Dendritic cell treated with granulocyte-macrophage colony-stimulating factor and Interleukin-4, amounts not matched to agents 40 ng/mL and 50 ng/mL, for 4 days (primary cell): ENCODE measurements at regions of chr4 and their contacts with region 1.

Region 1: DNA sequence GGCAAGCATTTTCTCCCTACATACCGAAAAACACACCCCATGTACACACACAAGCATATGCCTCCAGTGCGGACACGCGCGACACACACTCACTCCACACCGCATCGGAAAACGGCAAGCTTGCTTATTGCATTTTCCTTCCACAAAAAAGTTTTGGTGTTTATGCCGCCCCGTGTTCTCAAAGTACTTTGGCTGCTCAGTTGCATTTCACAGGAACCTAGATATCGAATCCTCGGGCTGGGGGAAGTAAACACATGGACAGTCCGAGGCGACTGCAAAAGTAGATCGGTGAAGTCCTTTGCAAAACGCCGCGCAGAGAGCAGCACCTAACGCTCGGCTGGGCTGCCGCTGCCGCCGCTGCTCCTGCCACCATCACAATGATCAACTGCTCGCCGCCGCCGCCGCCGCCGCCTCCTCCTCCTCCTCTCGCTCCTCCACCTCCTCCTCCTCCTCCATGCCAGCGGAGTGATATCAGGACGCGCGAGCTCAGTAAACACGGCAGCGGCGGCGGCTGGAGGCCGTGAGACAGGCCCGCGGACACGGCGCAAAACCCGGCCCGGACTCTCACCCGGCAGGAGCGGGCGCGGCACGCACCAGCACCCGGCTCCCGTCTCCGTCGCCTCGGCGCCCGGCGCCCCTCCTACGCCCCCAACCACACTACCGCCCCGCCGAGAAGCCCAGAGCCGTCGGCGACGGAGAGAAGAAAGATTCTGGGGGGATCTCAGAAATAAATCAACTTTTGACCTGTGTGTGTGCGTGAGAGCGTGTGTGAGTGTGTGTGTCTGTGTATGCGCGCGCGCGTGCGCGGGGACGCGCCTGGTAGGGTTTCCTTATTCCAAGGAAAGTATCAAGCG is at the start of gene MAML3:
- H3K4me3 Mint-ChIP-seq: peak within 1 kb of the TSS; percentile 92
- H3K27ac Mint-ChIP-seq: peak within 1 kb of the TSS; percentile 96
- H3K4me1 Mint-ChIP-seq: peaks cover 22% of the 10 kb centered on the region
- H3K27me3 Mint-ChIP-seq: no peaks in the 10 kb centered on the region

Region 2: GRCh38 chr4:139554893-139555704 is 598.8 kb before region 1 on chr4:
- intact Hi-C with region 1: loop called (anchors 10 kb)
- H3K4me3 Mint-ChIP-seq: peak overlapping the region; percentile 95
- H3K27ac Mint-ChIP-seq: peak overlapping the region; percentile 97
- H3K4me1 Mint-ChIP-seq: peaks cover 45% of the 10 kb centered on the region
- H3K27me3 Mint-ChIP-seq: peaks cover 7% of the 10 kb centered on the region

Region 3: DNA sequence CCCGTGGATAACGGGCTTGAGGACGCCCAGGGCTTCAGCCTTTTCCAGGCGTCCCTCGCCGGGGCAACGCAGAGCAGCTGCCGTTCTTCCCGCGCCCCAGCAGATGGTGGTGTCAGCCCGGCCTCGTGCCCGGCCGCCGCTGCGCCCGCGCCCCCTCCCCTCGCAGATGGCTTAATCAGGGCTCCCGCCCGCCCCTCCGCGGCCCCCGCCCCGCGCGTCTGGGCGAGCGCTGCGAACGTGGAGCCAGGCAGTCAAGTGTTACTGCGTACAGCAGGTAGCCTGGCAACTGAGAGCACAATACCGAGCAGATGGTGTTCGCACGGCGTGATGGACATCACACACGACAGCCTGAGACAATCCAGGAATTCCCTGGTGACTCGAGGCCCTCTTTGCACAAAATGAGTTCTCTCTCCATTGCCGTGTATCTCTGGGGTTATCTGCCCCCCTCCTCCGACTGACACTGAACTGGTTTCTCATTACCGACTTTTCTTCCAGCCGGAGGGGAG is 419.0 kb before region 1 on chr4:
- intact Hi-C with region 1: loop called (anchors 10 kb)
- H3K4me3 Mint-ChIP-seq: peak overlapping the region; percentile 71
- H3K27ac Mint-ChIP-seq: peak overlapping the region; percentile 49
- H3K4me1 Mint-ChIP-seq: peaks cover 40% of the 10 kb centered on the region
- H3K27me3 Mint-ChIP-seq: peaks cover 10% of the 10 kb centered on the region

Region 4: GRCh38 chr4:140012688-140013486 is 141.1 kb before region 1 on chr4:
- intact Hi-C with region 1: loop called (anchors 2 kb)
- H3K4me3 Mint-ChIP-seq: no peak overlapping the region
- H3K27ac Mint-ChIP-seq: no peak overlapping the region
- H3K4me1 Mint-ChIP-seq: peaks cover 12% of the 10 kb centered on the region
- H3K27me3 Mint-ChIP-seq: no peaks in the 10 kb centered on the region

Region 5: GRCh38 chr4:140052050-140052449 is 101.9 kb before region 1 on chr4:
- intact Hi-C with region 1: loop called (anchors 2 kb)
- H3K4me3 Mint-ChIP-seq: no peak overlapping the region
- H3K27ac Mint-ChIP-seq: no peak overlapping the region
- H3K4me1 Mint-ChIP-seq: peaks cover 51% of the 10 kb centered on the region
- H3K27me3 Mint-ChIP-seq: no peaks in the 10 kb centered on the region

Region 6: GRCh38 chr4:140095694-140096482 is 58.1 kb before region 1 on chr4:
- intact Hi-C with region 1: loop called (anchors 2 kb)
- H3K4me3 Mint-ChIP-seq: peak overlapping the region; percentile 72
- H3K27ac Mint-ChIP-seq: peak overlapping the region; percentile 92
- H3K4me1 Mint-ChIP-seq: peaks cover 88% of the 10 kb centered on the region
- H3K27me3 Mint-ChIP-seq: no peaks in the 10 kb centered on the region

Region 7: GRCh38 chr4:140252742-140253555 is 99.0 kb after region 1 on chr4:
- intact Hi-C with region 1: loop called (anchors 1 kb)
- H3K4me3 Mint-ChIP-seq: peak overlapping the region; percentile 70
- H3K27ac Mint-ChIP-seq: peak overlapping the region; percentile 65
- H3K4me1 Mint-ChIP-seq: peaks cover 28% of the 10 kb centered on the region
- H3K27me3 Mint-ChIP-seq: peaks cover 11% of the 10 kb centered on the region